ENCODE measurements at regions of chr5 and their contacts with region 1.

Region 1: DNA sequence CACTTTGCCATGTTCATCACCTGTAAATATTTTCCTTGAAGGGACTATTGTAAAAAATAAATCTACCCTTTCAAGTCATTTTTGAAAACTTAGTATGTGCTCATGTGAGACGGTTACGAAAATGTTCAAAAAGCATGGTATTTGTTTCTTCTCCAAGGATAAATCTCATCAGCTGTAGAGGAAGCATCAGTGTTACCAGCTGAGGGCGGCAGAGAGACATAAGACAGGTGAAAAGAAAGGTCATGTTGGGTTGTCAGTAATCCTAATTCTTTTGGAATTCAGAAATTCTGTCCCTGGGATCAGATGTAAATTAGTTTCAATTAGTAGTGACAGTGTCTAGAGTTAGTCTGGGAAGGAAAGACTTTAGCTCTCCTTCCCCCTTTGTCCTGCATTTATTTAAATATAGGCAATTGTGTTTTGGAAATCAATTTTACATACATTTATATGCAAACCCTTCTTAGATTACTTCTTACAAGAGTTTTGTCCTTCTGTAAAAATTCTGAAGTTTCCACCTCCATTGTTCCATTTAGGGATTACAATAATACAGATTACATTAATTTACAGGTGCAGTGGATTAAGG is 791.9 kb upstream of the CDH6 start:
- DNase-seq: no peak
- ATAC-seq: no peak

Region 2: DNA sequence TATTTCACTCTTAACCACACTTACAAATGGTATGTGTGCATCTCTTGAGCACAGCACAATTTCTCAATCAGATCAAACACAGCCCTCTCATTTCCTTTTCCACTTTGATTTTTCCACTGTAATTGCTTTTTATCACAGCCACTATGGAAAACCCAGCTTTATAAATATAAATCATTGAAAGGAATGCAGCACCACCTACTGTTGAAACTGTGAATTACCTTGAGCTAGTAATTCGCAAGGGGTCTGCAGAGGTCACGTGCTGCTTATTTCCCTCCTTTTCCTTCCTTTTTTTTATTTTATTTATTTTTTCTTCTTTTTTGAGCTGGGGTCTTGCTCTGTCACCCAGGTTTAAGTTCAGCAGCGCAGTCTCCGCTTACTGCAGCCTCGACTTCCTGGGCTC is 868.8 kb after region 1 on chr5:
- intact Hi-C with region 1: loop called (anchors 5 kb)
- DNase-seq: no peak
- ATAC-seq: no peak

Measured in Right ventricle myocardium inferior (tissue), 1 donor.